HEK293 (cell line): ENCODE measurements at regions of chrX and their contacts with region 1.

Region 1: GRCh38 chrX:110407910-110408545 is 49.4 kb downstream of the RTL9 start:
- H3K4me3 ChIP-seq: no peak overlapping the region
- H3K27ac ChIP-seq: no peak overlapping the region
- H3K4me1 ChIP-seq: no peaks in the 10 kb centered on the region
- CTCF ChIP-seq: no peak

Region 2: GRCh38 chrX:109720947-109721346 is 687.1 kb before region 1 on chrX:
- CTCF ChIA-PET with region 1: no interaction called
- POLR2A ChIA-PET with region 1: no interaction called
- H3K4me3 ChIP-seq: no peak overlapping the region
- H3K27ac ChIP-seq: no peak overlapping the region
- H3K4me1 ChIP-seq: 0 out of 2 replicates have a peak, but pooled peaks cover under 1% of the 10 kb centered on the region
- CTCF ChIP-seq: no peak

Region 3: DNA sequence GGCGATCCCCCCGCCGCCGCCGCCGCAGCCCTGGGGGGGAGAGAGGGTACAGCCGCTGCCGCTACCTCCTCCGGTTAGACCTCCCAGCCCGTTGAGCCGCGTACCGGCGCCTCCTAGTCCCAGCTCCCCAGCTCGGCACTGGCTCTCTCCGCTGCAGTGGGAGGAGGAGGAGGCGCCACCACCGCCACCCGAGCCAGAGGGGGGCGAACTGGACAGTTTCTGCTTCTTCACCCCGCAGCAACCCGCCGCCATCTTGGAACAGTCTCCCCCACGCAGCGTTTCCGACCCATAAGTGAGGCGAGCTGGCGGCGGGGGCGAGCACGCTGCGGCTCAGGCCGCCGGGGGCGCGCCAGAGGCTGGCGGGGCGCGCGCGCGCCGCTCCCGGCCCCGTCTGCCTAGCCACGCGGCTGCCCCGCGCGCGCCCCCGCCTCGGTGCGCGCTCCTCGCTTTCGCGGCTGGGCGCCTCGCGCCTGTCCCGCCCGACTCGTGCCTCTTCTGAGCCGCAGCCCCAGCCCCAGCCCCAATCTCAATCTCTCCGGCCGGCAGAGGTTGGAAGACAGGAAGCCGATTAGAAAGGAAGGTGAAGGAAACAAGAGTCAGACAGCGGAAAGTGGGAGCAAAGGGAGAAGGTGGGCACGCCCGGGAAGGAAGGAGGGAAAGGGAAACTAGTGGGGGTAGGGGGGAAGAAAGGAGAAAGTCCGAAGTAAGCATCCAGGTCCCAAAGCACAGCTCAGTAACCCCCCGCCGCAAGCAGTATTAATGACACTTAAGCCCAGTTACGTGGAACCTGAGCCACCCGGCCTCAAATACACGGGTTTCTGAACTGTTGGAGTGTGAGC is 90.0 kb before region 1 on chrX and contains the start of gene AMMECR1:
- CTCF ChIA-PET with region 1: interaction called, 12 read pairs
- POLR2A ChIA-PET with region 1: interaction called, 4 read pairs
- H3K4me3 ChIP-seq: peak within 1 kb of the TSS; percentile 90
- H3K27ac ChIP-seq: peak within 1 kb of the TSS; percentile 89
- H3K4me1 ChIP-seq: peaks cover 10% of the 10 kb centered on the region
- CTCF ChIP-seq: peak; percentile 78

Region 4: GRCh38 chrX:110389570-110389969 is 18.5 kb before region 1 on chrX:
- CTCF ChIA-PET with region 1: interaction called, 13 read pairs
- POLR2A ChIA-PET with region 1: no interaction called
- H3K4me3 ChIP-seq: no peak overlapping the region
- H3K27ac ChIP-seq: no peak overlapping the region
- H3K4me1 ChIP-seq: no peaks in the 10 kb centered on the region
- CTCF ChIP-seq: no peak

Region 5: GRCh38 chrX:110394671-110395070 is 13.4 kb before region 1 on chrX:
- CTCF ChIA-PET with region 1: interaction called, 13 read pairs
- POLR2A ChIA-PET with region 1: no interaction called
- H3K4me3 ChIP-seq: no peak overlapping the region
- H3K27ac ChIP-seq: no peak overlapping the region
- H3K4me1 ChIP-seq: no peaks in the 10 kb centered on the region
- CTCF ChIP-seq: no peak